Activated CD4-positive, alpha-beta memory T cell treated with anti-CD3 and anti-CD28 coated beads, Interleukin-2, amount 10 ng/mL, durations not matched to agents 7 days and 5 days (primary cell): ENCODE measurements at regions of chr12 and their contacts with region 1.

Region 1: DNA sequence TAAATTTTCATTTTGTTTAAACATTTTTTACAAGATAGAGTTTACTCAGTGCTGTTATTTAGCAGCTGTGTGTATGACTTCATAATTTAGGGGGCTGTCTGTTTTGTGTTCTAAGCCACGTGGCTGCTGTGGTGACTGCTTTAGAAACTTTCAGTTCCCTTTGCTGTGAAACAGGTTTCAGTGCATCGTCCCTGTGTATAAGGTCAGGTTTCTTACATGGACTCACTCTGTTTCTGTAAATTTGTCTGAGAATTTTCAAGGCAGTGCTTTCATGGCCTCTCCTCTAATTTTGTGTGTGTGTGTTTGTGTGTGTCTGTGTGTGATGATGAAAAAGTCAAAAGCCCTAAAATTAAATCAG is 32.4 kb downstream of the BICD1 start:
- DNase-seq: peak; percentile 44
- H3K4me3 Mint-ChIP-seq: peak overlapping the region; percentile 64
- H3K27ac Mint-ChIP-seq: no peak overlapping the region
- H3K4me1 Mint-ChIP-seq: peaks cover 31% of the 10 kb centered on the region
- H3K27me3 Mint-ChIP-seq: peaks cover 19% of the 10 kb centered on the region

Region 2: DNA sequence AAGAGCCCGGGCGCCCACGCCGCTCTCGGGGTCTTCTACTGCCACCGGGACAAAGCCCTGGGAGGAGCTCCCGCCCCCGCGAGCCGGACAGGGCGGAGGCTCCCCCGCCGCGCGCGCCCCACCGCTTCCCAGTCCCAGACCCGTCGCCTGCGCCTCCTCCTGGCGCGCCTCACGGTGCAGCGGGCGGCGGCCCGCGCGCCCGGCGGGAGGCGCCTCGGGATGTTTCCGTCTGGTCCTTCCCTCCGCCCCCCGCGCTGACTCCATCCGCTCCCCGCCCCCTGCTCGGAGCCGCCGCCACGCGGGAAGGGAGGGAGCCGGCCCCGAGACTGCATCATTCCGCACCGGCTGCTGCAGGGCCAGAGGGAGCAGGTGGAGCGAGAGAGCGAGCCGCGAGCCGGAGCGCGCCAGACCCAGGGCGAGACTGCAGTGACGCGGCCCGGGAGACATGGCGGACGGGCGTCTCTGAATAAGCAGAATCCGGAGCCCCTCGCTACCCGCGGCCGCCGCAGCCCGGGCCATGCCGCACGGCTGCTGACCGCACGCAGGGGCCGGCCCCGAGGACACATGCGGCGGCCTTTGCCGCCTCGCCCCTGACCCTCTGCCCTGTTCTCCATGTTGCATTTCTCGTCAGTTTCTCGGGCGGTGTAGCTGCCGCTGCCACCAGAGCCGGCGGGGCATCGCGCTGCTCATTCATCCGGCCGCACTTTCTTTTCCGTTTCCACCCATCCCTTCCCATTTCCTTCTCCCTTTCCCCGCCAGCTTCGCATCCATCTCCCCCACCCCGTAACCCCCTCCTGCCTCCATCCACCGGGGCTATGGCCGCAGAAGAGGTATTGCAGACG is 32.3 kb before region 1 on chr12 and contains the start of gene BICD1:
- CTCF ChIA-PET with region 1: interaction called, 4 read pairs
- POLR2A ChIA-PET with region 1: interaction called, 10 read pairs
- DNase-seq: peak; percentile 79
- H3K4me3 Mint-ChIP-seq: peak within 1 kb of the TSS; percentile 81
- H3K27ac Mint-ChIP-seq: peak within 1 kb of the TSS; percentile 79
- H3K4me1 Mint-ChIP-seq: peaks cover 32% of the 10 kb centered on the region
- H3K27me3 Mint-ChIP-seq: peaks cover 8% of the 10 kb centered on the region
- total RNA-seq, gene BICD1: 12.5 to 15.9 TPM

Region 3: GRCh38 chr12:32159925-32160324 is 20.9 kb after region 1 on chr12:
- CTCF ChIA-PET with region 1: no interaction called
- POLR2A ChIA-PET with region 1: no interaction called
- DNase-seq: no peak
- H3K4me3 Mint-ChIP-seq: no peak overlapping the region
- H3K27ac Mint-ChIP-seq: no peak overlapping the region
- H3K4me1 Mint-ChIP-seq: no peaks in the 10 kb centered on the region
- H3K27me3 Mint-ChIP-seq: no peaks in the 10 kb centered on the region

Region 4: DNA sequence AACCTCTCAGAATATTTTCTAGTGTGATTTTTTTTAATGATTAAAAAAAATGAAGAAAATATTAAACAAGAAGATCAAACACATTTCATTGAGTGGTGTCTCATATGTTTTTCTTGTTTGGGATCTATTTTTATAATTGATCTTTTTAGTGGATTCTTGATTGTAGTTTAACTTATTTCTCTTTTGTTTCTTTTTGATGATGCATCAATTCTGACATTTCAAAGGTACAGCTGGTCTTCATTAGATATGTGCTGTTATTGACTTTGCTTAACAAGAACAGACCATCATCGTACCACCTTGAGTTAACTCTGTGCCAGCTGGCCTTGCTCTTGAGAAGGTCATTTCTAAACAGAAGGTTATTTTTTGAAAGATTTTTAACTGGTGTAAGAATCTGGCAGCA is 214.5 kb after region 1 on chr12:
- CTCF ChIA-PET with region 1: no interaction called
- POLR2A ChIA-PET with region 1: no interaction called
- DNase-seq: no peak
- H3K4me3 Mint-ChIP-seq: no peak overlapping the region
- H3K27ac Mint-ChIP-seq: no peak overlapping the region
- H3K4me1 Mint-ChIP-seq: no peaks in the 10 kb centered on the region
- H3K27me3 Mint-ChIP-seq: no peaks in the 10 kb centered on the region